Transverse colon (tissue), 4 donors: ENCODE measurements at regions of chr2 and their contacts with region 1.

Region 1: GRCh38 chr2:28981016-28981441 is at the start of gene TOGARAM2:
- DNase-seq: no peak
- H3K4me3 ChIP-seq: no peak within 1 kb of the TSS
- H3K27ac ChIP-seq: peak within 1 kb of the TSS; percentile 21 to 80 (median 71)
- H3K4me1 ChIP-seq: peaks cover 0 to 18% (median 7%) of the 10 kb centered on the region in 4 donors
- H3K27me3 ChIP-seq: no peaks in the 10 kb centered on the region
- CTCF ChIP-seq: no peak
- EP300 ChIP-seq: no peak
- POLR2A ChIP-seq: no peak
- total RNA-seq, gene TOGARAM2: 0.79 to 7.1 (median 3.1) TPM in 3 of 4 donors, not detected in the other

Region 2: DNA sequence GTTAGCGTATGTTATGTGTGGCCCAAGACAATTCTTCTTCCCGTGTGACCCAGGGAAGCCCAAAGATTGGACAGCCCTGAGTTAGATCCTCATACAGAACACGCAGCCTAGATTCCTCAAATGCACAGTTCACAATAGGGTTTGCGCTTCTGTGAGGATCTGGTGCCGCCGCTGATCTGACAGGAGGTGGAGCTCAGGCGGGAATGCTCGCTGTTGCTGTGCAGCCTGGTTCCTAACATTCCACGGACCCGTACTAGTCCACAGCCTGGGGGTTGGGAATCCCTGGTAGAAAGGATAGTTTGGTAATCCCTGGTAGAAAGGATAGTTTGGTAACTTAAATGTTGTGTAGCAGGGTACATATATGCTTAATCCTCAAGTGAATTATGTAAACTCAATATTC is 1983.6 kb before region 1 on chr2:
- in situ Hi-C with region 1: no loop called
- intact Hi-C with region 1: loop called (anchors 5 kb)
- DNase-seq: no peak
- H3K4me3 ChIP-seq: no peak overlapping the region
- H3K27ac ChIP-seq: no peak overlapping the region
- H3K4me1 ChIP-seq: no peaks in the 10 kb centered on the region
- H3K27me3 ChIP-seq: no peaks in the 10 kb centered on the region
- CTCF ChIP-seq: no peak
- EP300 ChIP-seq: no peak
- POLR2A ChIP-seq: no peak

Region 3: DNA sequence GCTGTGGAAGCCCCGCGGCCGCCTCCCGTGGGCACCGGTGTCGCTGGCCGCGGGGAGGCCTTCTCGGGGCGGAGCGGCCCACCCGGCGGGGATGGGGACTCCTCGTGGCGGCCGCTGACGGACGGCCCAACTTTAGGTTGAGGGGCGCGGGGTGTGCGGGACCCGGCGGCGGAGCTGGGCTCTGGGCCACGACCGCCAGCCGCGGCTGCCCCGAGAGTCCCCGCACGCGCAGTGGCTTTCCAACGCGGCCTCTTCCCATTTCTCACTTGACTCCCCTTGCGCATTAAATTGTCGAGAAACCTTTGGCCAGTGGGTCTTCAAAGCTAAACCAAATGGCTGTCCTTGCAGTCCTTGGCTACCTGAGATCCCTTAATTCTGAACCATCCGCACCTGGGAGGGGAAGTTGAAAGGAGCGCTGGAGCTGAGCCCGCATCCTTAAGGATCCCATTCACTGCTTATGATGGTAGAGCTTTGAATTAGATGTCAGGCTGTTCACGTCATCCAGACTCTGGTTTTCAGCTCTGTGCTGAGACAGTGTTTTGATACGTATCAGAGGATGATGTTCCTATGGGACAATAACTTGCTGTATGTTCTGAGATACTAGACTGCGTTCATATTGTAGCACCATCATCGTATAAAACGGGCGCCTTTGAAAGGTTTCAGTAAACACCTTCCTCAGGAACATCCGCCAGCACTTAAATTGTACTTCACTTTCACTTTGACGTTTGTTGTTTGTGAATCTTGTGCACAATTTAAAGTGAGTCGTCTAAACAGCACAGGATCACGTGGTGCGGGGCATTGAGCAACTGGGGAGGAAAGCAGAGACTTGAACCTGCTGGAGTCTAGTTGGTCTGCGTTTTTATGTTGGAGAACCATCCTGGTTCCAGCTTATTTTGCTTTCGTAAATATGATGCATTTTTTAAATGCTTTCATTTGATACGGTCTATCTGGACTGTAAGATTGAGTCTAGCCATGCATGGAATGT is 135.1 kb after region 1 on chr2:
- in situ Hi-C with region 1: no loop called
- intact Hi-C with region 1: loop called (anchors 10 kb)
- DNase-seq: peak; percentile 71
- H3K4me3 ChIP-seq: peak overlapping the region; percentile 50 to 84 (median 60)
- H3K27ac ChIP-seq: peak overlapping the region; percentile 87 to 92 (median 90)
- H3K4me1 ChIP-seq: peaks cover 0 to 20% (median 5%) of the 10 kb centered on the region in 4 donors
- H3K27me3 ChIP-seq: no peaks in the 10 kb centered on the region
- CTCF ChIP-seq: no peak
- EP300 ChIP-seq: no peak
- POLR2A ChIP-seq: peak; percentile 34